ENCODE measurements at regions of chr18 and their contacts with region 1.

Region 1: GRCh38 chr18:48037481-48038271 is 107.2 kb upstream of the SMAD2 start:
- DNase-seq: peak in 3 of 5 donors; percentile 43 to 61 (median 44)
- ATAC-seq: peak; percentile 66 to 84 (median 74)
- H3K4me3 ChIP-seq: no peak overlapping the region
- H3K27ac ChIP-seq: no peak overlapping the region
- H3K4me1 ChIP-seq: peaks cover 0 to 27% (median 2%) of the 10 kb centered on the region in 12 donors
- H3K27me3 ChIP-seq: no peaks in the 10 kb centered on the region
- CTCF ChIP-seq: peak; percentile 24 to 65 (median 54)
- POLR2A ChIP-seq: no peak

Region 2: DNA sequence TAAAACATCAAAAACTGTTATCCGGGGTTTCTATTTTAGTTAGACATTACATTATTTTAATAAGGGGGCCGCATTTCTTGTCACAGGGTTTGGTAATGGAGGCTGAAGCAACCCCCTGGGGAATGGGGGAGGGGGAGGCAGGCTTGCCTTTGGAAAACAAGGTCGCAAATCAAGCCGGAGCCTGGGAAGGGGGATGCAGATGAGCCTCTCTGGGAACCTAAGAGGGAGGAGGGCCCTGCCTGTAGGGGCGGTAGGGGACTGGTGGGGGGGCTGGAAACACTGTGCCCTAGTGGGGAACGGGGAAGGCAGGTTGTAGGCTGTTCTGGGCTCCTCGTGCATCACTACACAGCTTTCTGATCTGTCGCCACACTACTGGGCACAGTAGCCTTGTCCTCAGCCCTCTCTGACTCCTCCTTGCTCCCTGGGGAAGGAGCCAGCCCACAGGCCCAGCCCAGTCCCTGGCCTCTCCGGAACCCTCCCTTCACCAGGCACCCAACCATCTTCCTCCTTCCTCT is 63.0 kb after region 1 on chr18:
- intact Hi-C with region 1: loop called in 3 of 10 experiments (anchors 5 to 10 kb)
- DNase-seq: no peak
- ATAC-seq: peak in 1 of 4 donors; percentile 13
- H3K4me3 ChIP-seq: no peak overlapping the region
- H3K27ac ChIP-seq: no peak overlapping the region
- H3K4me1 ChIP-seq: peaks cover 0 to 2% (median 0%) of the 10 kb centered on the region in 12 donors
- H3K27me3 ChIP-seq: no peaks in the 10 kb centered on the region
- CTCF ChIP-seq: no peak
- POLR2A ChIP-seq: no peak

Region 3: GRCh38 chr18:48136531-48137332 is 99.1 kb after region 1 on chr18:
- intact Hi-C with region 1: loop called in 1 of 10 experiments (anchors 5 kb)
- DNase-seq: no peak
- ATAC-seq: peak in 2 of 4 donors; percentile 11 to 35
- H3K4me3 ChIP-seq: peak overlapping the region; percentile 44 to 79 (median 62)
- H3K27ac ChIP-seq: peak overlapping the region in 4 of 12 donors; percentile 25 to 65 (median 43)
- H3K4me1 ChIP-seq: peaks cover 0 to 41% (median 17%) of the 10 kb centered on the region in 12 donors
- H3K27me3 ChIP-seq: peaks cover 0 to 29% (median 4%) of the 10 kb centered on the region in 9 donors
- CTCF ChIP-seq: no peak
- POLR2A ChIP-seq: no peak

Region 4: DNA sequence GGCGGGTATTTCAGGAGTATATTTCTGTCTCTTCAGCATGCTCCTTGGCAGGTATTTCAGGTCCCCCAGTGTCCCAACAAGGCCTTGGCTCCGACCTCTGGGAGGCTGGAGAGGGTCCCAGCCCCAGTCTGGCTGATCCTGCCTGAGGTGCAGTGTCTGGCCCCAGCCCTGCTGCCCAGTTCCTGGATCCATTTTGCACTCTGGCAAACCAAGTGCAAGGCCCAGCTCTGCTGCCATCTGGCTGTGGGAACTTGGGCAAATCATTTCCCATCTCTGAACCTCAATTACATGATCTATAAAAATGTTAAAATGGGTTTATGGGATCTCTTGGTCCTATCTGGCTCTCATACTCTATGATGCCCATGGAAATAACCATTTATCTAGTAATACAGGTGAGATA is 307.9 kb after region 1 on chr18:
- intact Hi-C with region 1: loop called in 7 of 10 experiments (anchors 5 to 10 kb)
- DNase-seq: no peak
- ATAC-seq: peak in 2 of 4 donors; percentile 38 to 51
- H3K4me3 ChIP-seq: no peak overlapping the region
- H3K27ac ChIP-seq: no peak overlapping the region
- H3K4me1 ChIP-seq: peaks cover 0 to 13% (median 5%) of the 10 kb centered on the region in 12 donors
- H3K27me3 ChIP-seq: no peaks in the 10 kb centered on the region
- CTCF ChIP-seq: peak in 8 of 12 donors; percentile 11 to 40 (median 26)
- POLR2A ChIP-seq: no peak

Measured in heart left ventricle (tissue), 16 donors.